Activated CD4-positive, alpha-beta T cell treated with anti-CD3 and anti-CD28 coated beads, Interleukin-2, amount 10 ng/mL, durations not matched to agents 24 days and 14 days (primary cell): ENCODE measurements at regions of chr1 and their contacts with region 1.

Region 1: GRCh38 chr1:150578965-150579798 is at the start of gene MCL1:
- DNase-seq: peak; percentile 98
- H3K4me3 Mint-ChIP-seq: peak within 1 kb of the TSS; percentile 94
- H3K27ac Mint-ChIP-seq: peak within 1 kb of the TSS; percentile 93
- H3K4me1 Mint-ChIP-seq: peaks cover 26% of the 10 kb centered on the region
- H3K27me3 Mint-ChIP-seq: no peaks in the 10 kb centered on the region
- total RNA-seq, gene MCL1: 278 and 280 TPM in 2 replicates

Region 2: GRCh38 chr1:150567717-150568593 is 11.2 kb before region 1 on chr1:
- intact Hi-C with region 1: loop called (anchors 1 kb)
- DNase-seq: peak; percentile 90
- H3K4me3 Mint-ChIP-seq: peak overlapping the region; percentile 94
- H3K27ac Mint-ChIP-seq: peak overlapping the region; percentile 99
- H3K4me1 Mint-ChIP-seq: peaks cover 74% of the 10 kb centered on the region
- H3K27me3 Mint-ChIP-seq: no peaks in the 10 kb centered on the region

Region 3: DNA sequence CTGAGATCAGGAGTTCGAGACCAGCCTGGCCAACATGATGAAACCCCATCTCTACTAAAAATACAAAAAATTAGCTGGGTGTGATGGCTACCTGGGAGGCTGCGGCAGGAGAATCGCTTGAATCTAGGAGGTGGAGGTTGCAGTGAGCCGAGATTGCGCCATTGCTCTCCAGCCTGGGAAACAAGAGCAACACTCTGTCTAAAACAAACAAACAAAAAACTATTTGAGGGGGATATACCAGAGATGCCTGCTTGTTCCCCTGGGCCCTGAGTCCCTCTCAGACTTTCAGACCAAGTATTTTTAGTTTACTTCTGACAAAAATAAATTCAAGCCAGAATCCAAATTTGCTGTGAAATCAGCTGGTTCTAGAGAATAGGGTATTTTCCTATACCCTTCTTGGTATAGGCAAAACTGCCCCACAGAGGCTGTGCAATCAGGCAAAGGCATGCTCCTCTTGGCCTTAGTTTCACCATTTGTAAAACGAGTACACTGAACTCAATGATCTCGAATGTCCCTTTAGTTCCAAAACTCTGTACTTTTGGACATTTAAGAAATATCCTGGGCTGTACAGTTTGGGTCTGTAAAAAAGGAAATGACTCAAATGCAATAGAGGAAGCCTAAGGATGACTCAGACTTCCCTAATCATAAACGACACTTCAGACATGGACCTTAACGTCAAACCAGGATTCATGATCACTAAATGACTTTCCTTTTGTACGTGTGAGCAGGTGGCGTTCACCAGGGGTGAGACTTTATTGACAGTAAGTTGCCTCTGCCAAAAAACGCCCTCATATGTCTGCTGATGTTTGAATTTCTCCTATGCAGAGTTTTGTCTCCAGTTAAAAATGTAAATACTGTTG is 34.1 kb after region 1 on chr1:
- intact Hi-C with region 1: loop called (anchors 1 kb)
- DNase-seq: peak; percentile 84
- H3K4me3 Mint-ChIP-seq: peak overlapping the region; percentile 78
- H3K27ac Mint-ChIP-seq: peak overlapping the region; percentile 95
- H3K4me1 Mint-ChIP-seq: peaks cover 55% of the 10 kb centered on the region
- H3K27me3 Mint-ChIP-seq: no peaks in the 10 kb centered on the region

Region 4: GRCh38 chr1:150621497-150622302 is 42.5 kb after region 1 on chr1:
- intact Hi-C with region 1: loop called (anchors 2 kb)
- DNase-seq: peak; percentile 88
- H3K4me3 Mint-ChIP-seq: peak overlapping the region; percentile 67
- H3K27ac Mint-ChIP-seq: peak overlapping the region; percentile 82
- H3K4me1 Mint-ChIP-seq: peaks cover 70% of the 10 kb centered on the region
- H3K27me3 Mint-ChIP-seq: no peaks in the 10 kb centered on the region

Region 5: DNA sequence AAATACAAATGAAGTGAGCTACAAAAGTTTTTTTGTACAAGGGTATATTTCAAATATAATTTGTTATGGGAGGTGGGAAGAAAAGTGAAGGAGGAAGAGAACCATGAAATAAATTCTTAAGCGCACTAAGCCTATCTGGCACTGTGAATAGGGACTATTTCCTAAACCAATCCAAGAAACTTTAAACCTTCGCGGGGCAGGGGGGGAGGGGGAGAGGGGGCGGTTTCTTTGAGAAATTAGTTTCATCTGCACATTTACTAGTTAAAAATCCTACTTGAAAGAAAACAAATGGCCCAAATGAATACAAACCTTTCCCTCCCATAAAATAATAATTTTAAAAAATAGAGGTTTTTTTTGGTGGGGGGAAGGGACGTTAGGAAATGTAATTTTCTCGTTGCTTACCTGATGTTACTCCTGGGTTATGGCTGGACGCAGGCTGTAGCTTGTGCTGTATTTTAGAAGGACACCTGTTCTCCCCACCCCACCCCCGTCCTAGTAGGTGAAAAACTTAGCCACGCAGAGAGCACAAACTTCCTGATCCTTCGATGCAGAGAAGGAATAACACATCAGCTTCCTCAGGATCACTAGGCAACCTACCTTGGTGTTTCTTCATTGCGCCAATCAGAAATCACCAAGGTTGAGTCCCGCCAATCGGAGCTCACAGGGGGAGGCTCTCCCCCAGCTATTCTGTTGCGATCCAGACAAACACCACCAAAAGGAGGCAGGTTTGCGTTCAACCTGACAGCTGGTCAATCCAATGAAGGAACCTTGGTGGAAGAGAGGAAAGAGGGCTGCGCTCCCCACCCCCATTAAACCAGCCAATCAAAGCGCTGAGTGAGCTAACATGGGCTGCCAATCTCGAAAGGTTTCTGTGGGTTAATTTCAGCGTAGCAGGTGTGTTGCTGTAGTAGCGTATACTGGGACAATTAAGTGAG is 117.7 kb after region 1 on chr1 and contains the start of gene GOLPH3L:
- intact Hi-C with region 1: loop called (anchors 5 kb)
- DNase-seq: peak; percentile 97
- H3K4me3 Mint-ChIP-seq: peak within 1 kb of the TSS; percentile 90
- H3K27ac Mint-ChIP-seq: peak within 1 kb of the TSS; percentile 92
- H3K4me1 Mint-ChIP-seq: peaks cover 19% of the 10 kb centered on the region
- H3K27me3 Mint-ChIP-seq: peaks cover 11% of the 10 kb centered on the region
- total RNA-seq, gene GOLPH3L: 19.6 and 19.8 TPM in 2 replicates